Activated CD8-positive, alpha-beta T cell treated with anti-CD3 and anti-CD28 coated beads for 36 hours (primary cell): ENCODE measurements at regions of chr19 and their contacts with region 1.

Region 1: GRCh38 chr19:10332955-10333757 is at the start of gene RAVER1:
- DNase-seq: peak; percentile 99
- ATAC-seq: peak; percentile 97
- H3K4me3 Mint-ChIP-seq: peak within 1 kb of the TSS; percentile 97
- H3K27ac Mint-ChIP-seq: peak within 1 kb of the TSS; percentile 98
- H3K4me1 Mint-ChIP-seq: peaks cover 38% of the 10 kb centered on the region
- H3K27me3 Mint-ChIP-seq: no peaks in the 10 kb centered on the region
- CTCF ChIP-seq: no peak
- total RNA-seq, gene RAVER1: 105 to 111 TPM

Region 2: GRCh38 chr19:10292206-10292788 is 40.9 kb before region 1 on chr19:
- CTCF ChIA-PET with region 1: interaction called, 5 read pairs
- POLR2A ChIA-PET with region 1: interaction called, 10 read pairs
- intact Hi-C with region 1: no loop called
- DNase-seq: peak; percentile 87
- ATAC-seq: peak; percentile 59
- H3K4me3 Mint-ChIP-seq: peak overlapping the region; percentile 73
- H3K27ac Mint-ChIP-seq: no peak overlapping the region
- H3K4me1 Mint-ChIP-seq: peaks cover 62% of the 10 kb centered on the region
- H3K27me3 Mint-ChIP-seq: peaks cover 75% of the 10 kb centered on the region
- CTCF ChIP-seq: no peak

Region 3: DNA sequence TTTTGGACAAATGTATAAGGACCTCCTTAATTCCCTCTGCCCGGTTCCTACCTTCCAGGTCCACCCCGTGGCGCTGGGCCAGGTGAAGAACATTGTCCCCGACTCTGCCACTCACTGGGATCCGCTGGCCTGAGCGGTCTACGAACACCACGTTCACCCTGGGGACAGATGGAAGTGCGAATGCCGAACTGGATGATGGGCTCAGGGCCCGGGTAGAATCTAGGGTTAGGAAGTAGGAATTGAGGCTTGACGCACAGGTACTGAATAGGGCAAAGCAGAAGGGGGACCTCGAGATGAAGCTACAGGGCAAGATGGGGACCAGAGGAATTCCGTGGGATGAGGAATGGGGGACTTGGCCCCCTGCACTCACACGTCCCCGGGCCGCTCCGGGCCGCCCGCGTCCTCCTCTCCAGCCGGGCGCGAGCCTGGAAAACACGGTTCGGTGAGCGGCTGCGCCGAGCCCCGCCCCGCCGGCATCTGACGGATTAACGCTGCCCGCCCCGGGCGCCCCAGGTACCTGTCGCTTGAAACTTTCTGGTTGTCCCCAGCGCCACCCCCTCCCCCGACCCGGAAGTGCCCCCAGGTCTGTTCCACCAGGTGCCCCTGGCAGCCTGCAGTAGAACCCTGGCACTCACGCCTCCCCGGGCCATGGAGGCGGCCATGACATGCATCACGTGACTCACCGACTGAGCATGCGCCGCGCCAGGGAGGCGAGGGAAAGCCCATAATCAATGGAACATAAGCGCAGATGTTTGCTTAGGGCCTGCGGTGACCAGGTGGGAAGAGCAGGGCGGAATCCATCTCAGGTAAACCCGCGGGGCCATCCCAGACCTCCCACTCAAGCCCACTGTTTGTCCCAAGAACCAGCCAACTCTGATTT is 17.6 kb before region 1 on chr19 and contains the start of gene FDX2:
- CTCF ChIA-PET with region 1: interaction called, 3 read pairs
- POLR2A ChIA-PET with region 1: interaction called, 25 read pairs
- intact Hi-C with region 1: no loop called
- DNase-seq: peak; percentile 95
- ATAC-seq: peak; percentile 93
- H3K4me3 Mint-ChIP-seq: peak within 1 kb of the TSS; percentile 93
- H3K27ac Mint-ChIP-seq: peak within 1 kb of the TSS; percentile 77
- H3K4me1 Mint-ChIP-seq: peaks cover 16% of the 10 kb centered on the region
- H3K27me3 Mint-ChIP-seq: no peaks in the 10 kb centered on the region
- CTCF ChIP-seq: no peak
- total RNA-seq, gene FDX2: 8.1 to 14.3 TPM

Region 4: GRCh38 chr19:10321412-10321786 is 11.8 kb before region 1 on chr19:
- CTCF ChIA-PET with region 1: interaction called, 3 read pairs
- POLR2A ChIA-PET with region 1: interaction called, 25 read pairs
- intact Hi-C with region 1: no loop called
- DNase-seq: no peak
- ATAC-seq: no peak
- H3K4me3 Mint-ChIP-seq: no peak overlapping the region
- H3K27ac Mint-ChIP-seq: no peak overlapping the region
- H3K4me1 Mint-ChIP-seq: peaks cover under 1% of the 10 kb centered on the region
- H3K27me3 Mint-ChIP-seq: no peaks in the 10 kb centered on the region
- CTCF ChIP-seq: no peak